Left ventricle myocardium inferior (tissue), 1 donor: ENCODE measurements at regions of chr3 and their contacts with region 1.

Region 1: GRCh38 chr3:56988458-56989168 is 71.9 kb upstream of the SPATA12 start:
- DNase-seq: peak; percentile 70
- H3K4me3 ChIP-seq: peak overlapping the region; percentile 45
- H3K27ac ChIP-seq: peak overlapping the region; percentile 59
- H3K4me1 ChIP-seq: peaks cover 33% of the 10 kb centered on the region
- H3K27me3 ChIP-seq: no peaks in the 10 kb centered on the region
- CTCF ChIP-seq: peak; percentile 86

Region 2: GRCh38 chr3:56702490-56703315 is 285.9 kb before region 1 on chr3:
- intact Hi-C with region 1: loop called (anchors 2 kb)
- DNase-seq: no peak
- H3K4me3 ChIP-seq: no peak overlapping the region
- H3K27ac ChIP-seq: no peak overlapping the region
- H3K4me1 ChIP-seq: peaks cover 3% of the 10 kb centered on the region
- H3K27me3 ChIP-seq: no peaks in the 10 kb centered on the region
- CTCF ChIP-seq: peak; percentile 92

Region 3: GRCh38 chr3:56801662-56802377 is 186.8 kb before region 1 on chr3 and contains the start of gene ARHGEF3:
- intact Hi-C with region 1: loop called (anchors 2 kb)
- DNase-seq: peak; percentile 88
- H3K4me3 ChIP-seq: peak within 1 kb of the TSS; percentile 88
- H3K27ac ChIP-seq: peak within 1 kb of the TSS; percentile 84
- H3K4me1 ChIP-seq: peaks cover 55% of the 10 kb centered on the region
- H3K27me3 ChIP-seq: no peaks in the 10 kb centered on the region
- CTCF ChIP-seq: peak; percentile 56
- total RNA-seq, gene ARHGEF3: 16.5 TPM

Region 4: GRCh38 chr3:57120040-57120439 is 131.4 kb after region 1 on chr3:
- intact Hi-C with region 1: no loop called
- DNase-seq: no peak
- H3K4me3 ChIP-seq: no peak overlapping the region
- H3K27ac ChIP-seq: no peak overlapping the region
- H3K4me1 ChIP-seq: peaks cover 15% of the 10 kb centered on the region
- H3K27me3 ChIP-seq: no peaks in the 10 kb centered on the region
- CTCF ChIP-seq: no peak